Breast epithelium (tissue), 4 donors: ENCODE measurements at regions of chr1 and their contacts with region 1.

Region 1: DNA sequence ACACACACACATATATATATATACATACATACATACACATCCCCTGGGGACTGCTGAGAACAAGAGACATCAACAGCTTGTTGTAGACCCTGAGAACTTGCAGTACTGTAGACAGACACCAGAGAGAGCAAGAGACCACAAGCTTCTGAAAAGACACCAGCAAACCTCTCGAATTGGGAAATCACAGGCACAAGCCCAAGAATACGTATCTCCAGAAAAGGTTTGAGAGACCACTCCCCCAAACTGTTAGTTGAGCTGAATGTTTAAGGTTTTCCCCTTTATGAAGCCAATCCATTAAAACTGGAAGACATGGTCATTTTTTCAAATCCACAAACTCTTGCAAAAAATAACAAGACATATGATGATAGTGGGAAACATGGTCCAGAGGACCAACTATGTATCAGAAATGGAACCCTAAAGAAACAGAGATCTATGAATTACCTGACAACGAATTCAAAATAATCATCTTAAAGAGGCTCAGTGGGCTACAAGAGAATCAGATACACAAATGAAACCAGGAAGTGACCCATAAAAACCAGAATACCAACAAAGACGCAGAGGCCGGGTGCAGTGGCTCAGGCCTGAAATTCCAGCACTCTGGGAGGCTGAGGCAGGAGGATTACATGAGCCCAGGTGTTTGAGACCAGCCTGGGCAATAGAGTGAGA is 45.1 kb downstream of the SLC2A1 start:
- DNase-seq: no peak
- H3K4me3 ChIP-seq: no peak overlapping the region
- H3K27ac ChIP-seq: no peak overlapping the region
- H3K4me1 ChIP-seq: no peaks in the 10 kb centered on the region
- H3K27me3 ChIP-seq: no peaks in the 10 kb centered on the region
- CTCF ChIP-seq: peak; percentile 88 to 91 (median 88)
- POLR2A ChIP-seq: no peak

Region 2: DNA sequence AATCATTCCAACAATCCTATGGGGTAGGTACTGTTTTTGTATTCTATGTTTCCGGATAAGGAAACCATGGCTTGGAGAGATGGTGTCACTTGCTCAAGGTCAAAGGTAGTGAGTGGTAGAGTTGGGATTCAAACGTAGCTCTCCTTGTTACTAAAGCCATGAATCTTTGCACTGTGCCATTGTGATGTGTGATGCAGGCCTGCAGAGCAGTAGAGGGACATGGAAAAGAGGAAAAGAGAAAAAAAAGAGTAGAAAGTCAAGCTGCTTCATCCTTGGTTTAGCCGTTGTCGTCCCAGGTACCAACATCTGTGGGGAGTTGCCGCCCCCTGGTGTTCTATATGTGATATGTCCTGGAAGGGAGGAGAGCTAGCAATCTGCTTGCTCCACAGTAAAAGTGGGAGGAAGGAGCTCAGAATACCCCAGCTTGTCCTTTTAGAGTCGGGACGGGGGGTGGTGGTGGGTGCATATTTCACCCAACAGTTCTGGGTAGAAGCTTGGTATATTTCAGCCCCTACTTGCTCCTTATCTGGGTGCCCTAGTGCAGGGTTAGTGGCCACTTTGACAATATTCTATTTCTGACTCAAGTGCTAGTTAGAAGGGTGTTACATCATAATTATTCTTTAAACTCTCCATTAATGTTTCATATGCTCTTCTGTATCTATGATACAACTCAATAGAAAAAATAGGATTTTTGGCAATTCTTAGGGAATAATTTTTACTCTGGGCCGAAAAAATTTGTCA is 160.1 kb after region 1 on chr1:
- intact Hi-C with region 1: loop called (anchors 2 kb)
- DNase-seq: peak; percentile 61 to 68
- H3K4me3 ChIP-seq: no peak overlapping the region
- H3K27ac ChIP-seq: no peak overlapping the region
- H3K4me1 ChIP-seq: no peaks in the 10 kb centered on the region
- H3K27me3 ChIP-seq: no peaks in the 10 kb centered on the region
- CTCF ChIP-seq: peak; percentile 91 to 97 (median 95)
- POLR2A ChIP-seq: no peak

Region 3: GRCh38 chr1:44674113-44675000 is 1760.8 kb after region 1 on chr1 and contains the starts of genes ARMH1 and TMEM53:
- intact Hi-C with region 1: loop called (anchors 5 kb)
- DNase-seq: peak; percentile 99 to 100
- H3K4me3 ChIP-seq: peak within 1 kb of the TSS; percentile 66 to 84 (median 66)
- H3K27ac ChIP-seq: peak within 1 kb of the TSS; percentile 98 to 99
- H3K4me1 ChIP-seq: peaks cover 6 to 23% of the 10 kb centered on the region in 2 donors
- H3K27me3 ChIP-seq: no peaks in the 10 kb centered on the region
- CTCF ChIP-seq: no peak
- POLR2A ChIP-seq: peak; percentile 34
- total RNA-seq, gene ARMH1: 1.8 to 3.8 (median 2.9) TPM
- total RNA-seq, gene TMEM53: 8.3 to 9.4 (median 9.2) TPM